Cardiac septum (tissue), 1 donor: ENCODE measurements at regions of chr10 and their contacts with region 1.

Region 1: DNA sequence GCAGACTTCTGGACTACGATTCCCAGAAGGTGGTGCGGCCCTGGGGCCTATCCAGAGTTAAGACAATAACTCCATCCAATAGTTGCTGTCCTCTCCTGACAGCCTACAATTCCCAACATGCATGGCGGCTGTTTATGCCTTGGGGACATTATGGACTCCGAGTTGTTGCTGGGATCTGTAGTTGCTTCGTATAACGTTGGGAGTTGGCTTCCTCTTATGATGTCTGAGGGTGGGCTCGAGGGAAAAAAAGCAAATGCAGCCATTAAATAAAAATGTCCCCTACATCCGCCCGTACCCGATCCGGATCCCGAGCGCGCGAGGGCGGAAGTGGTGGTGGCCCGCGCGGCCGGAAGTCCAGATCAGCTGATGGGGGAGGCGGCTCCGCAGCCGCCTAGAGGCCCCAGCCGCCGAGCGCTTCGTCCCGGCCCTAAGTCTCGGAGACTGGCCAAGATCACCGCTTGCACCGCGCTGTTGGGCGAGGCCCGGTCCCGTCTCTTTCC is at the start of gene ZSWIM8:
- DNase-seq: peak; percentile 94
- total RNA-seq, gene ZSWIM8: 57.1 TPM

Region 2: GRCh38 chr10:73517271-73517877 is 267.9 kb before region 1 on chr10:
- intact Hi-C with region 1: no loop called
- DNase-seq: no peak

Region 3: GRCh38 chr10:73732931-73733623 is 52.2 kb before region 1 on chr10:
- intact Hi-C with region 1: no loop called
- DNase-seq: no peak

Region 4: DNA sequence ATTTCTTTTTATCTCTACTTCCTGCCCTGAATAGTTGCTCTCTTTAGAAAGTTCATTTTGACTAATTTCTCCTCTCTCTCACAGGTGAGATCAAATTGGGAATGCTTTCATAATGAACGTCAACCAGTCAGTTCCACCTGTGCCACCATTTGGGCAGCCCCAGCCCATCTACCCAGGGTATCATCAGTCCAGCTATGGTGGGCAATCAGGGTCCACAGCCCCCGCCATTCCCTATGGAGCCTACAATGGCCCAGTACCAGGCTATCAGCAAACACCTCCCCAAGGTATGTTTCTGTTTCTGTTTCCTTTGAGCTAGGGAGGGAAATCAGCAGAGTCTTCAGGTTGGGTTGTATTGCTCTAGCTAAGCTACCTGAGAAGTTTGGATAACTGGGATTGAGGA is 38.5 kb before region 1 on chr10:
- intact Hi-C with region 1: loop called (anchors 5 kb)
- DNase-seq: no peak